Activated CD4-positive, alpha-beta T cell treated with anti-CD3 and anti-CD28 coated beads, Interleukin-2, amount 10 ng/mL, durations not matched to agents 24 days and 14 days (primary cell): ENCODE measurements at regions of chr2 and their contacts with region 1.

Region 1: GRCh38 chr2:176269319-176270099 is at the start of gene MTX2:
- DNase-seq: peak; percentile 92
- H3K4me3 Mint-ChIP-seq: peak within 1 kb of the TSS; percentile 93
- H3K27ac Mint-ChIP-seq: peak within 1 kb of the TSS; percentile 96
- H3K4me1 Mint-ChIP-seq: peaks cover 9% of the 10 kb centered on the region
- H3K27me3 Mint-ChIP-seq: peaks cover 6% of the 10 kb centered on the region
- total RNA-seq, gene MTX2: 29.9 and 30.7 TPM in 2 replicates

Region 2: GRCh38 chr2:176291809-176292283 is 22.3 kb after region 1 on chr2:
- intact Hi-C with region 1: loop called (anchors 2 kb)
- DNase-seq: peak; percentile 59
- H3K4me3 Mint-ChIP-seq: peak overlapping the region; percentile 21
- H3K27ac Mint-ChIP-seq: peak overlapping the region; percentile 38
- H3K4me1 Mint-ChIP-seq: peaks cover 26% of the 10 kb centered on the region
- H3K27me3 Mint-ChIP-seq: no peaks in the 10 kb centered on the region